ENCODE measurements at regions of chr10 and their contacts with region 1.

Region 1: GRCh38 chr10:68600041-68600778 is 40.1 kb downstream of the TET1 start:
- DNase-seq: peak; percentile 79
- H3K4me3 ChIP-seq: peak overlapping the region; percentile 58
- CTCF ChIP-seq: no peak

Region 2: GRCh38 chr10:68550747-68551411 is 49.3 kb before region 1 on chr10:
- CTCF ChIA-PET with region 1: interaction called, 13 read pairs
- POLR2A ChIA-PET with region 1: no interaction called
- DNase-seq: no peak
- H3K4me3 ChIP-seq: no peak overlapping the region
- CTCF ChIP-seq: peak; percentile 81

Region 3: DNA sequence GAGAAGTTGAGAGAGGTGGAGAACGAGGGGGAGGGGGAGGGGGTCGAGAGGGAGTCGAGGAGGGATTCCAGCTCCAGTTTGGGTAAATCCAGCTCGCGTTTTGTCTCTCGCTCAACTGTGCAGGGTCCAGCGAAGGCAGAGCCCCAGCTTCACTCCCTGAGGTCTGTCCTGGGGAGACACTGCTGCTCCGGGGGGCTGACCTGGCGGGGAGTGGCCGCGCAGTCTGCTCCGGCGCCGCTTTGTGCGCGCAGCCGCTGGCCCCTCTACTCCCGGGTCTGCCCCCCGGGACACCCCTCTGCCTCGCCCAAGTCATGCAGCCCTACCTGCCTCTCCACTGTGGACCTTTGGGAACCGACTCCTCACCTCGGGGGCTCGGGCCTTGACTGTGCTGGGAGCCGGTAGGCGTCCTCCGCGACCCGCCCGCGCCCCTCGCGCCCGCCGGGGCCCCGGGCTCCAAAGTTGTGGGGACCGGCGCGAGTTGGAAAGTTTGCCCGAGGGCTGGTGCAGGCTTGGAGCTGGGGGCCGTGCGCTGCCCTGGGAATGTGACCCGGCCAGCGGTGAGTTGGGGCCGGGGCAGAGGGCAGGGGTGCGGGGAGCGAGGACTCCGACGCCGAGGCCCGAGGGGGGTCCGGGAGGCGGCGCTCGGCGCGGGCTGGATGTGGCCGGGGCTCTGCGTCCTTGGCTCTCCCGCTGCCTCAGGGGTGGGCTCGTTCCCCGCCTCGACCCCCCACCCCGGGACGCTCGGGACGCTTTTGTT is 39.8 kb before region 1 on chr10 and contains the start of gene TET1:
- CTCF ChIA-PET with region 1: interaction called, 4 read pairs
- POLR2A ChIA-PET with region 1: interaction called, 27 read pairs
- DNase-seq: no peak
- H3K4me3 ChIP-seq: peak within 1 kb of the TSS; percentile 80
- CTCF ChIP-seq: no peak